ENCODE measurements at regions of chr1 and their contacts with region 1.

Region 1: DNA sequence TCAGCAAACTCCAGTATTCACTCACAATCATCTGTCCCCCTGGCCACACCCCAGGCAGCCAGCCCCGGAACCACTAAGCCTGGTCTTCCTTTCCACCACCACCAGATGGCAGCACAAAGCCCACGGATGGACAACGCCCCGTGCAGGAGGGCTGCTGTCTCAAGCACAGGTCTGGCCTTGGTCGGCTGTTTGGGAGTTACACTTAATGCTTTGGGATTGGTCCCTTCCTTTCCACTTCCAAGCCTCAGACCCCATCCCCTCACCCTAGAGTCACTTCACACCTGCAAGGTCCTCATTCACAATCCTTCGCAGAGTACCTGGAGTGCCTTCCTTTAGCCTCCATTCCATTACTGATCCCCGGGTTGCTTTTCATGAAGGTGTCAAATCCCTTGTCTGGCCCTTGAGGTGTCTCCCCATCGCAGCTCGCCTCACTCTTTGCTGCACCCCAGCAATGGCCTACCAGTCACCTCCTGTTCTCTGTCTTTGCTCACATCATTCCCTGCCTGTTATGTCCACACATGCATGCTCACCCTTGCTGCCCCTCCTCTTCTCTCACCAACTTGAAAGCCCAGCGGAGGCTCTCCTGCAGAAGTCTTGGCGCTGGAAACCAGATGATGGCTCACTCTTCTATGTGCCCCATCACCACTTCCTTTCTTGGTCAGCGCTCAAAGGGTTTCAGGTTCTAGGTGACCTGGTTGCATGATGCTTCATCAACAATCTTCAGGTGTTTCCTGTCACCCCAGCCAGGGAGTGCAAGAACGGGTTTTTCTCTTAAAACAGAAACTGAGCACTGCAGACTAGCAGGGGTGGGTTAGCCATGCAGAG is 24.9 kb upstream of the KCNA2 start:
- DNase-seq: peak; percentile 80 to 88
- H3K4me3 ChIP-seq: no peak overlapping the region
- H3K27ac ChIP-seq: peak overlapping the region in 1 of 5 donors; percentile 54
- H3K4me1 ChIP-seq: peaks cover 0 to 19% (median 13%) of the 10 kb centered on the region in 4 donors
- H3K27me3 ChIP-seq: peaks cover 0 to 14% (median 2%) of the 10 kb centered on the region in 3 donors
- CTCF ChIP-seq: peak in 6 of 7 experiments; percentile 26 to 82 (median 72)
- EP300 ChIP-seq: no peak
- POLR2A ChIP-seq: no peak

Region 2: GRCh38 chr1:110766025-110766647 is 135.1 kb after region 1 on chr1:
- intact Hi-C with region 1: loop called (anchors 5 kb)
- DNase-seq: peak in 1 of 2 donors; percentile 73
- H3K4me3 ChIP-seq: no peak overlapping the region
- H3K27ac ChIP-seq: no peak overlapping the region
- H3K4me1 ChIP-seq: no peaks in the 10 kb centered on the region
- H3K27me3 ChIP-seq: peaks cover 0 to 42% (median 4%) of the 10 kb centered on the region in 3 donors
- CTCF ChIP-seq: peak in 5 of 7 experiments; percentile 57 to 74 (median 67)
- EP300 ChIP-seq: no peak
- POLR2A ChIP-seq: no peak